ENCODE measurements at regions of chr4 and their contacts with region 1.

Region 1: GRCh38 chr4:109735566-109736365 is 5.9 kb upstream of the PLA2G12A start:
- DNase-seq: no peak
- H3K4me3 ChIP-seq: no peak overlapping the region
- H3K27ac ChIP-seq: no peak overlapping the region
- H3K27me3 ChIP-seq: peaks cover 0 to 5% (median 0%) of the 10 kb centered on the region in 45 donors
- CTCF ChIP-seq: no peak

Region 2: GRCh38 chr4:109671350-109671749 is 64.4 kb before region 1 on chr4:
- intact Hi-C with region 1: loop called in 1 of 2 experiments (anchors 2 kb)
- DNase-seq: no peak
- H3K4me3 ChIP-seq: no peak overlapping the region
- H3K27ac ChIP-seq: no peak overlapping the region
- H3K27me3 ChIP-seq: peaks cover 0 to 4% (median 0%) of the 10 kb centered on the region in 45 donors
- CTCF ChIP-seq: no peak

Region 3: DNA sequence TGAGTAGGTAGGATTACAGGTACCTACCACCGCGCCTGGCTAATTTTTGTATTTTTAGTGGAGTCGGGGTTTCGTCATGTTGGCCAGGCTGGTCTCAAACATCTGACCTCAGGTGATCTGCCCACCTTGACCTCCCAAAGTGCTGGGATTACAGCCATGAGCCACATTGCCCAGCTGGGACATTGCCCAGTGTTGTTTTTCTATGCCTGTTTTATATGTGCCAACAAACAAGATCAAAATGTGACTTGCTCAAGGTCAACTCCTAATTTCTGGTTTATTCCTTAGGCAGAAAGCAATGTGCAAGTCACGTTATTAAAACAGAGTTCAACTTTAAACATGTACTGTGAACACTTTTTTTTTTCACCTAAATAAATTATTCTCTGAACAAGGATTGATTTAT is 114.8 kb after region 1 on chr4:
- intact Hi-C with region 1: no loop called
- DNase-seq: no peak
- H3K4me3 ChIP-seq: no peak overlapping the region
- H3K27ac ChIP-seq: no peak overlapping the region
- H3K27me3 ChIP-seq: no peaks in the 10 kb centered on the region
- CTCF ChIP-seq: no peak

Region 4: DNA sequence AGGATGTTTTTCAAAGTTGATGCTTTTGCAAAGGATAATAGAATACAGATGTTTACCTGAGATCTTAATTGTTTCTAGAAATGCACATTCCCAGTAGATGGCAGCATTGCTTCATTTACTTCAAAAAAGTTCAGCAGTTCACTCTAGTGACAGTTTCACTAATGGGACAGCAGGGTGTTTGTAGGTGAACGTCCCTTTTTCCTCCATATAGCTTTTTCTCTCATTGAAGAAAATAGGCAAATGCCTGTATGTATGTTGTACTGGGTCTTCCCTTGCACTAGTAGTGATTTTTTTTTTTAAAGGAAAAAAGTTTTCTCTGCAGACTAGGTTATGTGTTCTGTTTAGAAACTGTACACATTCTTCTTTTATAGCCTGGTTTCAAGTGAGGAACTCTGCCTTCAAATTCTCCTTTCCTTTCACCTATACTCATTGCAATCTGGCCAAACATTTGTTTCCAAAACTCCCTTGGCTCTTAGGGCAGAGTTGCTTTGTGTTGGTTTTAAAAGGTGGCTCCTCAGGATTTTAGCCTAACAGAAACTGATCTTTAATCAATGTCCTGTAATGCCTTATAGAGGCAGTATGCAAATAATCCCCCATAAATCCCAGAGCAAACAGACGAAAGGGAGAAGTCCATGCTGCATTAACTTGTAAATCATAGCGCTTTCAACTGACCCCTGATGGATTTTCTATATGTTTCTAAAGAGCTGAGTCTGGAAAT is 263.3 kb after region 1 on chr4:
- intact Hi-C with region 1: no loop called
- DNase-seq: no peak
- H3K4me3 ChIP-seq: no peak overlapping the region
- H3K27ac ChIP-seq: no peak overlapping the region
- H3K27me3 ChIP-seq: peaks cover 0 to 3% (median 0%) of the 10 kb centered on the region in 45 donors
- CTCF ChIP-seq: peak; percentile 49 to 96 (median 82)